ENCODE measurements at regions of chr1 and their contacts with region 1.

Region 1: DNA sequence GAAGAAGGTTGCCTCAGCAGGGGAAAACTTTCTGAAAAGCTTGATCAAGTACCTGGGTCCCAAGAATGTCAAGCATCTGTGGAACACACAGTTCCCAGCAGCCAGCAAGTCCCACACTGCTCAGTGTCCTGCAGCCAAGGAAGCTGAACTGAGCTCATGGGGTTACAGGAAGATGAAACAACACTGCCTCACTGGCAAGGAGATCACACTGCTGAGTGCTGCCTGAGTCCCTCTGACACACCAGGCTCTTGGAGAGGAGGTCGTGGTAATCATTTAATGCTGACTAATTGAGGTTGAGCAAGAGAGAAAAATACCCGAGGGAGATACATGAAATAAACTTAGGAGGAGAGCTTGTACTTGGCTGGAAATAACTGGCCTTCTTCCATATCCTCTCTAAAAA is 75.2 kb downstream of the MPZL1 start:
- DNase-seq: peak; percentile 81

Region 2: GRCh38 chr1:167533851-167534300 is 263.1 kb before region 1 on chr1:
- intact Hi-C with region 1: no loop called
- DNase-seq: peak; percentile 83

Region 3: DNA sequence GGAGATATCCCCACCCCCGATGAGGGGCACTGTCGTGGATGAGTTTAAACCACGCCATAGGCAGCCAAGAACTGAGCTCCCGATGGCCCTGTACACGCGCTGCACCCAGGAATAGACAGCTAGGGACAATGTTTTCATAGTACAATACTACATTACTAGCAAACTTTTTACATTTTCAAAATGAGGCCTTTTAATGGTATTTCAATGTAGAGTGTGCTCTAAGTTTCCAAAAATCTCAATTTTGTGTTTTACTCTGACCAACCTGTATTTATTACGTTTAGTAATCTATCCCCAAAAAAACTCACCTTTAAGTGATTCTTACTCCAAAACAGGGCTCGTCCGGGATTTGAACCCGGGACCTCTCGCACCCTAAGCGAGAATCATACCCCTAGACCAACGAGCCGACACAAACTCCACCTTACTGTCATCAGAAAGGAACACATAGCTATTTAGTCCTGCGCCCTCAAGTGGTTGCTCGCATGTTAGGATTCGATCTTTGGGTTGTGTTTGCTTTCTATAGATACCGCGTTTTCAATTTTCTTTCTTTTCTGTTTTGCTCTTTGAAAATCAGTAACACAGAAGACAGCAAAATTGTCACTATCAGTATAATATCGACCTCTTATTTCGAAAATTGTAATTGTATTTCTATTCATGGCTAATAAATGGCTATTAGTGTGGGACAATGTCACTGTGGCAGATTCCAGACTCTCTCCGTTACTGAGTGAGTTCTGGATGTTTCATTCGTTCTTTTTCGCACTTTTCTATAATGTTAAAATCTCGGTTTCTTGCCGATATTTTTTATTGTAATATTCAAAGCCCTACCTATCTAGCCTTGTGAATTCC is 81.6 kb before region 1 on chr1:
- intact Hi-C with region 1: loop called (anchors 2 kb)
- DNase-seq: peak; percentile 87

Measured in cardiac septum (tissue), 1 donor.